ENCODE measurements at regions of chr3 and their contacts with region 1.

Region 1: GRCh38 chr3:171829841-171830517 is 13.2 kb upstream of the TMEM212 start:
- DNase-seq: peak; percentile 25 to 95 (median 56)

Region 2: GRCh38 chr3:170953229-170953628 is 876.8 kb before region 1 on chr3:
- intact Hi-C with region 1: loop called (anchors 10 kb)
- DNase-seq: peak in 3 of 10 donors; percentile 20 to 72 (median 71)

Region 3: GRCh38 chr3:171646357-171647133 is 183.4 kb before region 1 on chr3:
- intact Hi-C with region 1: loop called (anchors 5 kb)
- DNase-seq: no peak

Region 4: DNA sequence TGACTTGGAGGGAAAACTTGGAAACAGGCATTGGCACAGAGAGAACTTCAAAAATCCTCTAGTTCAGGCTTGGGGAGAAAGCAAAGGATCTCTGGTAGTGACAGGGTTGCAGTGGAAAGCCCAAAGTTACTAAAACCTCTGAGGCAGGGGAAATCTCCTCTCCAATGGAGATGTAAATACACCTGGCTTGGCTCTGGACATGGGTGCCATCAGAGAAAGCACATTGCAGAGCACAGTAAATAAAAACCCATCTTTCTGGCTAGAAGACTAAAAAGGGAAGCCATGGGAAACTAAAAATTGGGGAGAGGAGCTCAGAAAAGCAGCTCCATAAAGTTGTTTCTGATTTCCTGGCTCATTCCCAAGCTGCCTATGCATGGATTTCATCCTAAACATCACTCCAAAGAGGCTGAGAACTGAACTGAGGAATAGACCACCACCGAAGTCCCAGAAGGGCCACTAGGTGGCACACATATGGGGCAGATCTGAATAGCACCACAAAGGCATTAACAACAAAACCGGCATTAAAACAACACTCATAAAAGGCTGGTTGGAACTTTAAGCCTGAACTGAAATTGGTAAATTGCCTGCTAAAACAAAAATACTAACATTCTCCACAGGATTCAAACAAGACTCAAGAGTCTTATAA is 126.1 kb before region 1 on chr3:
- intact Hi-C with region 1: loop called (anchors 5 kb)
- DNase-seq: peak in 3 of 10 donors; percentile 21 to 63 (median 46)

Region 5: DNA sequence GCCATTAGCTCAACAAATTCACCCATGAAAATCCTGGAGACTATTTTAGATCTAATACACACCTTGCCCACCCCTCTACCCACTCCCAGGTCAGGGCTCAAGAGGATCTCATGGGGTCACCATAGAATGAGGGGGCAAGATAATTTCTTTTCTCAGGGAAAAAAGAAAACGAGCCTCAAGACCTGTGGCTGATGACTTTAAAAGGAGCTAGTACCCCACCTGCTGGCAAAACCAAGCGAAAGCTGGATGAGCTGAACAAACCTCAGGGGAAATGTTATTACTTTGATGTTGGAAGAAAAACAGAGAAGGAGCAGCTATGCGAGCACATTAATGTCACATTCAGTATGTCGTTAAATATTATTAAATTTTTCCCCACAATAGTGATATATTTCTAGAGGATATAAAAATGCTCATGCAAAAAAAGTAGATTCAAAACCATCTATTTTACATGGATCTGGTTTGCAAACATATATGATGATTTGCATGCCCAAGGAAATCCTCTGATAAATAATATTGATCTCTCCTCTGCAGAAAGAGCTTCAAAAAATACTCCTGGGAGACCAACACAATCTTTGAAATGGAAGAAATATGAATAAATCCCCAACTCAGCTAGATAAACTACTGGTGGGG is 57.4 kb before region 1 on chr3:
- intact Hi-C with region 1: loop called (anchors 5 kb)
- DNase-seq: peak in 6 of 10 donors; percentile 49 to 92 (median 61)